Ovary (tissue), 10 donors: ENCODE measurements at regions of chr1 and their contacts with region 1.

Region 1: GRCh38 chr1:16366722-16367257 is at the start of gene SZRD1:
- DNase-seq: peak; percentile 95 to 98 (median 97)
- H3K4me3 ChIP-seq: peak within 1 kb of the TSS; percentile 82
- H3K27ac ChIP-seq: peak within 1 kb of the TSS; percentile 98 to 99
- H3K4me1 ChIP-seq: peaks cover 7% of the 10 kb centered on the region
- H3K27me3 ChIP-seq: no peaks in the 10 kb centered on the region
- CTCF ChIP-seq: no peak
- EP300 ChIP-seq: peak; percentile 13
- POLR2A ChIP-seq: no peak
- total RNA-seq, gene SZRD1: 45.3 to 152 (median 131) TPM

Region 2: GRCh38 chr1:16187748-16188401 is 178.9 kb before region 1 on chr1:
- intact Hi-C with region 1: loop called in 2 of 4 experiments (anchors 10 kb)
- DNase-seq: peak; percentile 80 to 89 (median 84)
- H3K4me3 ChIP-seq: no peak overlapping the region
- H3K27ac ChIP-seq: no peak overlapping the region
- H3K4me1 ChIP-seq: peaks cover 5% of the 10 kb centered on the region
- H3K27me3 ChIP-seq: no peaks in the 10 kb centered on the region
- CTCF ChIP-seq: peak; percentile 90 to 99 (median 98)
- EP300 ChIP-seq: no peak
- POLR2A ChIP-seq: peak; percentile 22

Region 3: DNA sequence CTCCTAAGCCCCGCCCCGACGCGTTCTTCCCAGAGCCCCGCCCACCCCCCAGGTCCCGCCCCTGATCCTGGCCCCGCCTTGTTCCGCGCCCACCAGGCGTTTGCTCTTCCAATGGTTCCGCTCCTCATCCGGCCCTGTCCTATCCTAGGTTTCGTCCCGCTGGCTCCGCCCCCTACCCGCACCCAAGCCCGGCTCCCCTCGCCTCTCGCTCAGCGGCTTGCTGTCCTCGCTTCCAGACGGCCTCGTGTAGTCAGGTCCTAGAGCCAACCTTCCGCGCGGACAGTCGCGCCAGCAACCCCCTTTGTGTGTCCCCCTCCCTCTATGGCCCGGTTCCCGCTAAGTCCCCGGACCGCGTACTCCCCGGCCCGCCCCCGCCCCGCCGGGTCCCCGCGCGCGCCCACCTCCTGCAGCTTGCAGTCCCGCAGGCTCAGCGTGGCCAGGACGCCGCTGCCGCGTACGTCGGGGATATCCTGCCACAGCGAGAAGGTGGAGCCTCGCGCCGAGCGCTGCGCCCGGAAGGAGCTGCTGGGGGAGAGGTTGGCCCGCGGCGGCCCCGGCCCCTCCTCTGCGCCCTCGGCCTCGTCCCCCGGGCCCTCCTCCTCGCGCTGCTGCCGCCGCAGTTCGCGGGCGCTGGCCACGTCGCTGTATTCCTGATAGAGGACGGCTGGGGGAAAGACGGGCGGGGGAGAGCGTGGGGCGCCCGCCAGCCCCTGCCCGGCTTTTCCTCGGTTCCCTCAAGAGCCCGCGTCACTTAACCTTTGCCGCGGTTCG is 160.1 kb before region 1 on chr1:
- intact Hi-C with region 1: loop called in 1 of 4 experiments (anchors 10 kb)
- DNase-seq: peak; percentile 98 to 99 (median 99)
- H3K4me3 ChIP-seq: peak overlapping the region; percentile 51
- H3K27ac ChIP-seq: peak overlapping the region; percentile 76 to 90
- H3K4me1 ChIP-seq: peaks cover 5% of the 10 kb centered on the region
- H3K27me3 ChIP-seq: no peaks in the 10 kb centered on the region
- CTCF ChIP-seq: no peak
- EP300 ChIP-seq: no peak
- POLR2A ChIP-seq: peak; percentile 52

Region 4: DNA sequence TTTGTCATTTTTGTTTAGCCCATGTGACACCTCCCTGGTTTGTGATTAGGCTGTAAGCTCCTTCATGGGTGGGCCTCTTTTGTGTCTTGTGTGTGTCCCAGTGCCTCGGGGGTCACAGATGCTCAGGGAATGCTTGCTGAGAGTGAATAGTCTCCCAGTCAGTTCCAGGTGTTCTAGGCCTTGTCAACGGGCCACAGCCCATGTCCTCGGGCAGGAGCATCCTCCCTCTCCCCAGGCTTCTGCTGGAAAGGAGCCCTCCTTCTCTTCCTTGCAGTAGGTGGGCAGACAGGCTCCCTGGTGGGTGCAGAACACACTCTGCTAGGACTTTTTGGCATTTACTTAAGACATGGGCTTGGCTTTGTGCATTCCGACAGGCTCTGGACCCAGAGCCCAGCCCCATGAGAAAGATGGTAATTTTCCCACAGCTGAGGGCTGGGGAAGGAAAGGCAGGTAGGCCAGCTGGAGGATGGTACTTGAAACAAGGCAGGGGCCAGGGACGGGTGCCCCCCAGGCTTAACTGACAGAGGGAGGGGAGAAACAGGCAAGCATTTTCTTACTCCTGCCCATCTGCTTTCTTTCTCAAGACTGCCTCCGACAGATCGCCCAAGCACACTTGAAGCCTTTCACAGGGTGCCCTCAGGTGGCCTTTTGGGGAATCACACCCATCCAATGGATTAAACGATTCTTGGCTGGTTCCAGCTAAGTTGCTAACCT is 122.7 kb before region 1 on chr1:
- intact Hi-C with region 1: loop called in 1 of 4 experiments (anchors 5 kb)
- DNase-seq: peak; percentile 76 to 91 (median 82)
- H3K4me3 ChIP-seq: no peak overlapping the region
- H3K27ac ChIP-seq: peak overlapping the region; percentile 23 to 46
- H3K4me1 ChIP-seq: peaks cover 23% of the 10 kb centered on the region
- H3K27me3 ChIP-seq: no peaks in the 10 kb centered on the region
- CTCF ChIP-seq: peak; percentile 74 to 93 (median 91)
- EP300 ChIP-seq: no peak
- POLR2A ChIP-seq: no peak